ENCODE measurements at regions of chr3 and their contacts with region 1.

Region 1: DNA sequence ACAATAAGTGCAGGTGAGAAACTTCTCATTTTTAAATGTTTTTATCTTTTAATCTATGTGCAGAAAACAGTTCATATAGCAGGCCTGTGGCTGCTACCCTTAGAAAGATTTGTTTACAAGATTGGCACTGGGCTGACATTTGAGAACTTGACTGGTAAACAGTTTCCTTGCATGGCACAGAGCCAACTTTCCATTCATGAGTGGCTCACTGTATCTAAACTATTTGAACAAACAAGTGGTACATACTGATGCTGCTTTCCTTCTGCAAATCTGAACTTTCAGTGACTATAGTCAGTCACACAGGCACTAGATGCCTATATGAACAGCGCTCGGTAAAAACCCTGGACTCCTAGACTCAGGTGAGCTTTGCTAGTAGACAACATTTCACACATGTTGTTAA is 6.3 kb upstream of the GTPBP8 start:
- DNase-seq: peak; percentile 46
- H3K4me3 ChIP-seq: no peak overlapping the region
- H3K27ac ChIP-seq: no peak overlapping the region
- H3K4me1 ChIP-seq: no peaks in the 10 kb centered on the region
- H3K27me3 ChIP-seq: no peaks in the 10 kb centered on the region
- CTCF ChIP-seq: no peak
- POLR2A ChIP-seq: no peak

Region 2: DNA sequence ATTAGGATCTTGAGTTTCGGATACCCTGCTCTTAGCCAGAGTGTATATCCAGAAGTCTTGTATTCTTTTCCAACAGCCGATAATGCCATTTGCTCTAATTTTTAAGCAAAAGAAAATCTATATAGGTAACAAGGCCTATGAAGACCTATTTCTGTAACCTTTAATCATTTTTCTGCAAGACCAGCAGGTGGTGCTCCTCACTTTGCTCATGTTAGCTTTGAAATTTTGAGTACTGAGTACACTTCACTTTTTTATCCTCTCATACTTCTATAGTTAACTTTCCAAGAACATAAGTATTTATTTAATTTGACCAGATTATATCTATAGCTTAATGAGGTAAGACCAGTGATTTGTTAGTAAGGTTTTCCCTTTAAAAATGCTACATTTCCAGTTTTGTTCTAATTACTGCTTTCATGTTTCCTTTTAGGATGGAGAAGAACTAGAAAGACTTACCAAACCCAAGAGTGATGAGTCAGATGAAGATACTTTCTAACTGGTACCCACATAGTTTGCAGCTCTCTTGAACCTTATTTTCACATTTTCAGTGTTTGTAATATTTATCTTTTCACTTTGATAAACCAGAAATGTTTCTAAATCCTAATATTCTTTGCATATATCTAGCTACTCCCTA is 402.1 kb before region 1 on chr3:
- intact Hi-C with region 1: loop called (anchors 5 kb)
- DNase-seq: no peak
- H3K4me3 ChIP-seq: no peak overlapping the region
- H3K27ac ChIP-seq: no peak overlapping the region
- H3K4me1 ChIP-seq: no peaks in the 10 kb centered on the region
- H3K27me3 ChIP-seq: no peaks in the 10 kb centered on the region
- CTCF ChIP-seq: peak in 3 of 4 experiments; percentile 26 to 56 (median 53)
- POLR2A ChIP-seq: no peak